Left lung (tissue), 14 donors: ENCODE measurements at regions of chr17 and their contacts with region 1.

Region 1: GRCh38 chr17:4789901-4790704 is 1.3 kb downstream of the GLTPD2 start:
- DNase-seq: peak; percentile 86 to 97 (median 90)
- ATAC-seq: peak; percentile 92
- H3K4me3 ChIP-seq: peak overlapping the region; percentile 73 to 80
- H3K27ac ChIP-seq: peak overlapping the region; percentile 94 to 95
- H3K4me1 ChIP-seq: peaks cover 23 to 40% of the 10 kb centered on the region in 2 donors
- H3K27me3 ChIP-seq: peaks cover 13 to 55% of the 10 kb centered on the region in 2 donors
- CTCF ChIP-seq: peak; percentile 68 to 83

Region 2: DNA sequence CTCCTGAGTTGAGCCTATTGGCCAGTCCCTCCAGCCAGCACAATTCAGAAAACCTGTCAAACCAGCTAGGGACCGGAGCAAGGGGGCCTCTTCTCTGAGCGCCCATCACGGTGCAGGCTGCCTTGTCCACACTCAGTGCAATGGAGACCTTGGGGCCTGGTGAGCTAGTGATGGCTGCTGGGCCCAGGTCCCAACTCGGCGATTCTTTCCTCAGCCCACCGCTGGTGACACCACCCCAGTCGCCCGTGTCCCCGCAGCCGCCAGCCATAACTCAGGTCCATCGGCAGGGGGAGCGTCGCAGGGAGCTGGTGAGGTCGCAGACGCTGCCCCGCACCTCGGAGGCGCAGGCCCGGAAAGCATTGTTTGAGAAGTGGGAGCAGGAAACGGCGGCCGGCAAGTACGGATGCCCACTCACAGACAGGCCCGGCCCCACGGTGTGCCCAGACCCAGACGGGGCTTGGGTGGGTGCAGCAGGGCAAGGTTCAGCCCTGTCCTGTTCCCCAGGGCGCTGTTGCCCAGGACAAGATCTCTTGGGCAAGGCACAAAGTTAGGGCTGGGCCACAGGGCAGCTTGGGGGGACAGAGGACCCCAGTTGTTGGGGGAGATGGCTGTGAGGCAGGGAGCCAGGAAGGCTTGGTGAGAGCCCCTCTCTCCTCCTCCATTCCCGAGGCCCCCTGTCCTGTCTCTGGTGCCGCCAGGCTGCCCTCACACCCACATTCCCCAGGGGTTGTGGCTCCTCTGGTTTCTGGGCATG is 195.0 kb before region 1 on chr17:
- intact Hi-C with region 1: no loop called
- DNase-seq: peak in 2 of 4 donors; percentile 70 to 85
- ATAC-seq: peak; percentile 67
- H3K4me3 ChIP-seq: no peak overlapping the region
- H3K27ac ChIP-seq: no peak overlapping the region
- H3K4me1 ChIP-seq: peaks cover 6 to 7% of the 10 kb centered on the region in 2 donors
- H3K27me3 ChIP-seq: peaks cover 0 to 18% of the 10 kb centered on the region in 2 donors
- CTCF ChIP-seq: peak; percentile 26 to 44

Region 3: DNA sequence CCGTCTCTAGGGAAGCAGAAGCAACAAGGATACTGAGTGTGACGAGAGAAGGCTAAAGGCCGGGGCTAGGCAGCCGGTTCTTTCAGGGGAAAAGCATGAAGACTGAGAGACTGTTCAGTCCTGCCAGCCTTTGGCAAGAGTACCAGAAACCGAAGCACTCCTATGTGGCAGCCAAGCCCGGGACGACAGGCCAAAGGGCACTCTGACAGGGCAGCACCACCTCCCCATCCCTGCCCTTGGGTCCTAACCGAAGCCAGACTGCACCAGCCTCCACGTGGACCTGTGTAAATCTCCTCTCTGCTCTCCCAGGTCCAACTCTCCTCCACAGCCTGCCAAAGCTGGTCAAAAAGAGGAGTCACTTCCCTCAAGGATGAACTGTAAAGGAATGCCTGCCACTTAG is 125.1 kb before region 1 on chr17:
- intact Hi-C with region 1: no loop called
- DNase-seq: no peak
- ATAC-seq: no peak
- H3K4me3 ChIP-seq: no peak overlapping the region
- H3K27ac ChIP-seq: no peak overlapping the region
- H3K4me1 ChIP-seq: no peaks in the 10 kb centered on the region
- H3K27me3 ChIP-seq: peaks cover 0 to 19% of the 10 kb centered on the region in 2 donors
- CTCF ChIP-seq: no peak

Region 4: DNA sequence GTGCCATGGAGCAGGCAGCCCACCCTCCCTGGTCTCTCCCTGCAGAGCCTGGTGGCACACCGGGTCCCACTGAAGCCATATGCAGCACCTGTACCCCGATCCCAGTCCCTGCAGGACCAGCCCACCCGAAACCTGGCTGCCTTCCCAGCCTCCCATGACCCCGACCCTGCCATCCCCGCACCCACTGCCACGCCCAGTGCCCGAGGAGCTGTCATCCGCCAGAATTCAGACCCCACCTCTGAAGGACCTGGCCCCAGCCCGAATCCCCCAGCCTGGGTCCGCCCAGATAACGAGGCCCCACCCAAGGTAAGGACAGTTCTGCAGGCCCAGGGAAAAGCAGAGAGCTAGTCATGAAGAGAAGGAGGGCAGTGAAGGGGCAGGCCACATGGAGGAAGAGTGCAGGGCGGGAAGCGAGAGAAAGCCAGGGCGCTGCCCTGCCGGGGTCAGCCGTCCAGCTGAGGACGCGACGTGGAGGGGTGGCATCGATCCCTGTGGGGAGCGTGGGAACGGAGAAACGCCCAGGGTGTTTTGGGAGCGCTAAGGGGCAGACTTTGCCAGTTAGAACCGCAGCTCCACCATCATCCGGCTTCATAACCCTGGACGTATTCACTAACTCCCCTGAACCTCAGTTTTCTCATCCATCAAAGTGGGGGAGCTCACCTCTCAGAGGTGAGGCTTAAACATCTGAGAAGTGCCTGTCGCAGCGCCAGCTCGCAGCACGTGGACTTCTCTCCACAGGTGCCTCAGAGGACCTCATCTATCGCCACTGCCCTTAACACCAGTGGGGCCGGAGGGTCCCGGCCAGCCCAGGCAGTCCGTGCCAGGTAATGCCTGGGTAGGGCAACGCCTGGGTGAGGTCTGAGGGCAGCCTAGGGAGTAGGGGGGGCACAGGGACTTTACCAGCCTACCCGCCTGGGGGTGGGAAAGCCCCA is 101.6 kb after region 1 on chr17:
- intact Hi-C with region 1: loop called in 1 of 2 experiments (anchors 5 kb)
- DNase-seq: peak in 1 of 4 donors; percentile 71
- ATAC-seq: no peak
- H3K4me3 ChIP-seq: no peak overlapping the region
- H3K27ac ChIP-seq: no peak overlapping the region
- H3K4me1 ChIP-seq: no peaks in the 10 kb centered on the region
- H3K27me3 ChIP-seq: no peaks in the 10 kb centered on the region
- CTCF ChIP-seq: no peak